ENCODE measurements at regions of chr6 and their contacts with region 1.

Region 1: DNA sequence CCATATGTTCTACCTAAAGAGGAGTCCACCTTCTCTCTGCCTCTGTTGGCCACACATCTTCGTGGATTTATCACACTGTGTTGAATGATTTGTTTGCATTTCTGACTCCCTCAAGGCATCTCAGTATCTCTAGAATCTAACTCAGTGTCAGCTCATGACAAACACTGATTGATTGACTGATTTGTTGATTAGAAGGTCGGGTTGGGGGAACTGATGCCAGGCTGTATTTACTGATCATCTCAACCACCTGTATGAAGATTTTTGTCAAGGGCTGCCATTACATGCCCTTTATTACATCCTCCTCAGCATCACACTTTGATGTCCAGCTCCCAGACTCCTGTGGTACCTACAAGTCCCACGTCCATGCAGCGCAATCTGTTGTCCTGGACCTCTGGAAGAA is 46.7 kb downstream of the MYLK4 start:
- DNase-seq: no peak
- ATAC-seq: no peak
- H3K4me3 ChIP-seq: no peak overlapping the region
- H3K27ac ChIP-seq: no peak overlapping the region
- H3K4me1 ChIP-seq: no peaks in the 10 kb centered on the region
- H3K27me3 ChIP-seq: peaks cover 2% of the 10 kb centered on the region; the same call in 1 of the 2 replicates
- CTCF ChIP-seq: no peak

Region 2: DNA sequence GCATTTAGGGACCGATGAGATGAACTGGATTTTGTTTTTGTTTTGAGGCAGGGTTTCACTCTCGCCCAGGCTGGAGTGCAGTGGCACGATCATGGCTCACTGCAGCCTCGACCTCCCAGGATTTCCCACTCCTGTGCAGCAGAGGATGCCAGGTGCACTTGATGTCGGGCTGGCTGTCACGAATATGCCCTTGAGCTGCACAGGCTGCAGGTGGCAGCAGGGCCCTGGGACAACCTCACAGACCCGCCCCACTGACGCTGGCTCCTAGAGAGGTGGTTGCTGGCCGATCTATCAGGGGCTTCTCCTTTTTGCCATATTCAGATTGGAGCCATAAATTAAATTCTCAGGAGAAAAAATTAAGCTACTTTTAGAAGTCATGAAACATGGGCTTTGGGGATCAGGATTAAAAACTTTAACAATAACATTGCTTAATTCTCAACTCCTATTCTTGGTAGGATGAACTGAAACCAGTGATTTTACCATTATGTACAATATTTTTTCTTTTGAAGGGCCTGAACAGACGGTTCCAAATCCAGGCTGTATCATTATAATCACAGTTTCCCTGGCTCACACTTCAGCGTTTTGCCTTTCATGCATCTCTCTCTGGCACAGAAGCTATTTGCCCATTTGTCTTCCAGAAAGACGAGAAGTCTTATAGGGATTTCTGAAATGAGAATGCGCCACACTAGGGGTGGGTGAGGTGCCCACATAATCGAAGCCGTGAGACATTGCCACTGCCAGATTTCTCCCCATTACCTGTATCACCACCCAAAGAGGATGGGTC is 328.1 kb after region 1 on chr6:
- CTCF ChIA-PET with region 1: interaction called, 12 read pairs
- POLR2A ChIA-PET with region 1: no interaction called
- in situ Hi-C with region 1: no loop called
- intact Hi-C with region 1: no loop called
- DNase-seq: no peak
- ATAC-seq: peak; percentile 68
- H3K4me3 ChIP-seq: no peak overlapping the region
- H3K27ac ChIP-seq: no peak overlapping the region
- H3K4me1 ChIP-seq: no peaks in the 10 kb centered on the region
- H3K27me3 ChIP-seq: peaks cover 2% of the 10 kb centered on the region; the same call in 1 of the 2 replicates
- CTCF ChIP-seq: no peak